AG04449 (cell line): ENCODE measurements at regions of chr6 and their contacts with region 1.

Region 1: GRCh38 chr6:3977875-3978711 is 100.8 kb downstream of the FAM217A start:
- DNase-seq: peak; percentile 84
- H3K4me3 ChIP-seq: no peak overlapping the region
- CTCF ChIP-seq: peak; percentile 46

Region 2: DNA sequence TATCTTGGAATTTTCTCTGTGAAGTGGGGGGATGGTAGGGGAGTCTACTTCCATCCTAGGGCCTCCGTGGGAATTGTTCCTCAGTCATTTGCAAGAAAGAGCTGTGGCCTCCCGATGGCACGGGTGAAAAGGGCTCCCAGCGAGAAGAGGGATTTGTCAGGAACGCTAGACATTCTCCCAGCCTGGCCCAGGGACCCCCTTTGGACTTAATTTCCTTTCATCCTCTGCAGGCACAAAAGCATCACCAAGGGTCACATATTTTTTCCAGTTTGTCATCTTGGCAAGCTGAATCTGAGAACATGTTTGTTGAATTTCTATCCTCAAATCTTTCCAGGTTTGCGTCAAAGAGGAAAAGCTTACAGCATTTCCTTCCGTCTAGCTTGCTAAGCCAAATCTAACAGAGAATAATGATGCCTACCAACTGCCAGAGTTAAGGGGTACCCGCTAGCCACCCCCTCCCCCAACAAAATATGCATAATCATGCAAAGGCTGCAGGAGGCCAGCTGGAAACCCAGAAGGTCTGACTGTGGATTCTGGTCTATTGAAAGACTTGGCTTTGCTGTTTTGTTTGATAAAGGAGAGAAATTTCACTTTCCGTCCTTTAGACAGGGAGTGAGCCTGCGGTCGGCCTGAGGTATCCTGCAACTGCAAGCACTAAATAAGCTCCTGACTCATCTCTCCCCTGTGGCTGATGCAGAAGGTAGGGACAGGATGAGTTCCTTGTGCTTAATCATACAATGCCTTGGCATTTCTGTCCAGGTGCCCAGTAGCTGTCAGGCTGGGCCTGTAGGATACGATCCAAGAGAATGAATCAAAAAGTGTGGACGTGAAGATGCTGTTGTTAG is 696.2 kb before region 1 on chr6:
- CTCF ChIA-PET with region 1: interaction called, 16 read pairs
- POLR2A ChIA-PET with region 1: no interaction called
- DNase-seq: peak; percentile 37
- H3K4me3 ChIP-seq: no peak overlapping the region
- CTCF ChIP-seq: no peak

Region 3: DNA sequence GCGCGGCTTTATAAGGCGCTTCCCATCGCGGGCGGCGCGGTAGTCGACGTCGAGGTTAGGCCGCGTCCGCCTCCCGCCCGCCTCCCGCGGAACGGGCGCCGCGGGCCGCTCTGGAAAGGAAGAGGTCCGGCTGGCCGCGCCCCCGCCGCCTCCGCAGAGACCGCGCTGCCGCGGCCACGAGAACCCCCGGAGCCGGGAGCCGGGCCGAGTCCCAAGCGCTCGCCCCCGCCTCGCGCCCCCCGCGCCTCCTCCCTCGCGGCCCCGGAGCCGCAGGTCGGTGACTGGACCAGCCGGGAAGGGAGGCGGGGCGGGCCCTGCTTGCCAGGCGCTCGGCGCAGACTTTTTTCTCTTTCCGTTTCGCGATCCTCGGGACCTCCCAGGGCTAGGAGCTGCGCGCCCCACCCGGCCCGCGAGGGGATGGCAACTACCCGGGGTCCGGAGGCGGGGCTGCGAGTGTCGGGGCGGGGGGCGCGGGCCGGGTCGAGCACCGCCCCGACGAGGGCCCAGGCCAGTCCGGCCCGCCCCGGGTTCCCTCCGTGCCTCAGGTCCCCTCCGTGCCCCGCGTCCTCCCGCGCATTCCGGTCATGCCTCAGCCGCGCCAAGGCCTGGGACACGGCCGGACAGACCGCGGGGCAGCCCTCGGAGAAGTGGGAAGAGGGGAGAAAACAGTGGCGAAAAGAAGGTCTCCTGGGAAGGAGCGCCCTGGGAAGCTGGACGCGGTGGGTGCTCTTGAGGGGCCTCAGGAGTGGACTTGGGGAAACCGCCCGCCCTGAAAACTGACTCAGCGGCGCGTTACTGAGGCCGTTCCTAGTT is 226.2 kb before region 1 on chr6:
- CTCF ChIA-PET with region 1: interaction called, 35 read pairs
- POLR2A ChIA-PET with region 1: no interaction called
- DNase-seq: no peak
- H3K4me3 ChIP-seq: peak overlapping the region; percentile 92
- CTCF ChIP-seq: peak; percentile 53

Region 4: GRCh38 chr6:3894590-3895311 is 83.3 kb before region 1 on chr6:
- CTCF ChIA-PET with region 1: interaction called, 22 read pairs
- POLR2A ChIA-PET with region 1: no interaction called
- DNase-seq: no peak
- H3K4me3 ChIP-seq: no peak overlapping the region
- CTCF ChIP-seq: no peak

Region 5: GRCh38 chr6:3943331-3943765 is 34.7 kb before region 1 on chr6:
- CTCF ChIA-PET with region 1: interaction called, 16 read pairs
- POLR2A ChIA-PET with region 1: no interaction called
- DNase-seq: no peak
- H3K4me3 ChIP-seq: no peak overlapping the region
- CTCF ChIP-seq: no peak

Region 6: DNA sequence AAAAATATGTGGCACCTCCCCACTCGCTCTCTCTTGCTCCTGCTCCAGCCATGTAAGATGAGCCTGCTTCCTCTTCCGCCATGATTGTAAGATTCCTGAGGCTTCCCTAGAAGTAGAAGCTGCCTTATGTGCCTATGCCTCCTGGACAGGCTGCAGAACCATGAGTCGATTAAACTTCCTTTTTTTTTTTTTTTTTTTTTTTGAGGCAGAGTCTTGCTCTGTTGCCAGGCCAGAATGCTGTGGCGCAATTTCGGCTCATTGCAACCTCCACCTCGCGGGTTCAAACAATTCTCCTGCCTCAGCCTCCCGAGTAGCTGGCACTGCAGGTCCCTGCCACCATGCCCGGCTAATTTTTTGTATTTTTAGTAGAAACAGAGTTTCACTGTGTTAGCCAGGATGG is 11.7 kb before region 1 on chr6:
- CTCF ChIA-PET with region 1: interaction called, 39 read pairs
- POLR2A ChIA-PET with region 1: interaction called, 3 read pairs
- DNase-seq: no peak
- H3K4me3 ChIP-seq: no peak overlapping the region
- CTCF ChIP-seq: no peak

Region 7: GRCh38 chr6:4008324-4009047 is 30.4 kb after region 1 on chr6:
- CTCF ChIA-PET with region 1: interaction called, 11 read pairs
- POLR2A ChIA-PET with region 1: no interaction called
- DNase-seq: peak; percentile 76
- H3K4me3 ChIP-seq: no peak overlapping the region
- CTCF ChIP-seq: peak; percentile 44

Region 8: DNA sequence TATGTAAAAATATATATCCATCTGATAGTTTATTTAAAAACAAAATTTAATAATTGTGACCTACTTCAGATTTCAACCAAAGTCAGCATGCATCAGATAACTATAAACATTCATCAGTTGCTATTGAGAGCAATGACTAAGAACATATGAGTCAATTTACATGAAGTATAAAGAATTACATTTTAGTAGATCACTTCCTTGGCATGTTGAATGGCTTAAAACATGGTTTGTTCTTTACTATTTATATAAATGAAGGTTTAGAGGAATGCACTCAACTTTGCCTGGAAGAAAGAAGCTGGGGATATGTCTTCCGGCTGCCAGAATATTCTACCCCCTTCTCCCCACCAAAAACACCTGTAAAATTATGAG is 107.2 kb after region 1 on chr6:
- CTCF ChIA-PET with region 1: no interaction called
- POLR2A ChIA-PET with region 1: no interaction called
- DNase-seq: peak; percentile 10
- H3K4me3 ChIP-seq: no peak overlapping the region
- CTCF ChIP-seq: no peak

Region 9: GRCh38 chr6:4522453-4522852 is 544.4 kb after region 1 on chr6:
- CTCF ChIA-PET with region 1: no interaction called
- POLR2A ChIA-PET with region 1: no interaction called
- DNase-seq: no peak
- H3K4me3 ChIP-seq: no peak overlapping the region
- CTCF ChIP-seq: no peak